Body of pancreas (tissue), 4 donors: ENCODE measurements at regions of chr17 and their contacts with region 1.

Region 1: GRCh38 chr17:66791347-66791746 is 43.6 kb upstream of the CACNG5 start:
- DNase-seq: peak in 3 of 4 donors; percentile 34 to 58 (median 43)
- ATAC-seq: peak; percentile 27
- H3K4me3 ChIP-seq: no peak overlapping the region
- H3K27ac ChIP-seq: peak overlapping the region in 2 of 4 donors; percentile 17 to 51
- H3K4me1 ChIP-seq: peaks cover 8% of the 10 kb centered on the region
- H3K27me3 ChIP-seq: no peaks in the 10 kb centered on the region
- CTCF ChIP-seq: no peak
- POLR2A ChIP-seq: peak in 1 of 3 donors; percentile 20

Region 2: DNA sequence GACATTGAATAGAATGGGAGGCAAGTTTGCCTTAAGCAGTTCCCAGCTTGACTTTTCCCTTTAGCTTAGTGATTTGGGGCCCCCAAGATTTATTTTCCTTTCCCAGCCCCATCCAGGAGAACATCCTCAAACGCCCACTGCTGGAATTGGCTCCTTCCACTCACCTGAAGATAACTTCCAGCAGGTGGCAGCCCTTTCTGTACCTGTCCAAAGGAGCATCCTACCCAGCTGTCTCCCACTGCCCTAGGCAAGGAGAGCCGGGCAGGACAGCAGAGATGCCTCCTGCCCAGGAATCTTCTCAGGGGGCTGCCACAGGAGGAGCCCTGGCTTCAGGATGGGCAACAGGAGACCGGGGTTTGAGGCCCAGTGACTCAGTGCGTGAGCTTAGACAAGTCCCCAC is 50.0 kb after region 1 on chr17:
- intact Hi-C with region 1: loop called (anchors 10 kb)
- DNase-seq: no peak
- ATAC-seq: no peak
- H3K4me3 ChIP-seq: no peak overlapping the region
- H3K27ac ChIP-seq: no peak overlapping the region
- H3K4me1 ChIP-seq: no peaks in the 10 kb centered on the region
- H3K27me3 ChIP-seq: no peaks in the 10 kb centered on the region
- CTCF ChIP-seq: no peak
- POLR2A ChIP-seq: no peak

Region 3: DNA sequence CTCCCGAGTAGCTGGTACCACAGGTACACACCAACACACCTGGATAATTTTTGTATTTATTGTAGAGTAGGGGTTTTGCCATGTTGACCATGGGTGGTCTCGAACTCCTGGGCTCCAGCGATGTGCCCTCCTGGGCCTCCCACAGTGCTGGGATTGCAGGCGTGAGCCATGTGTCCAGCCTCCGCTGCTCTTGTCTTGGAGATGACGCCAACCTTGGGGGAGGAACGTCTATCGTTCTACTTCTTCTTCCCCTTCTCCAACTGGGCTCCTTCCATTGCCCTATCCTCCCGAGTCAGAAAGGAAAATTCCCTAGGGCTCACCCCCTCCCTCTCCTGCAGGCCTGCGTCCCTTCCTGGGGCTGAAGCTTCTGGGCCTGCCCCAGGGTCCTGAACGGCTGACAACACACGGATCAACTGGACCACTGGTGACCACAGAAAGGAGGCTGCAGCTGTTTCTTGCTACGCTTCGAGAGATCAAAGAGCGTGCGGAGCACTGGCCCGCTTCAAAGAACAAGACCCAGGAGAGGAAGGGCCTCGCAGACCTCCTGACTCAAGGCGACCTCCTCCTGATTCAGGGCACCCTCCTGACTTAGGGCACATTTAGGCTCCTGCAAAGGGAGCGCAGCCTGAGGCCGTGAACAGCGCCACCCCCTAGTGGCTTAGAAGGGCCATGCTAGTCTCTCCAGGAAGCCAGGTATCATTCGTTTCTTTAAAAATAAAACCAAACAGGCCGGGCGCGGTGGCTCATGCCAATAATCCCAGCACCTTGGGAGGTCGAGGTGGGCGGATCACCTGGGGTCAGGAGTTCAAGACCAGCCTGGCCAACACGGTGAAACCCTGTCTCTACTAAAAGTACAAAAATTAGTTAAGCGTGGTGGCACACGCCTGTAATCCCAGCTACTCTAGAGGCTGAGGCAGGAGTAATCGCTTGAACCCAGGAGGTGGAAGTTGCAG is 502.2 kb after region 1 on chr17:
- intact Hi-C with region 1: no loop called
- DNase-seq: peak; percentile 68 to 78 (median 75)
- ATAC-seq: peak; percentile 81
- H3K4me3 ChIP-seq: no peak overlapping the region
- H3K27ac ChIP-seq: no peak overlapping the region
- H3K4me1 ChIP-seq: peaks cover 8% of the 10 kb centered on the region
- H3K27me3 ChIP-seq: no peaks in the 10 kb centered on the region
- CTCF ChIP-seq: peak; percentile 64 to 91 (median 77)
- POLR2A ChIP-seq: no peak